CD14-positive monocyte (primary cell): ENCODE measurements at regions of chr4 and their contacts with region 1.

Region 1: DNA sequence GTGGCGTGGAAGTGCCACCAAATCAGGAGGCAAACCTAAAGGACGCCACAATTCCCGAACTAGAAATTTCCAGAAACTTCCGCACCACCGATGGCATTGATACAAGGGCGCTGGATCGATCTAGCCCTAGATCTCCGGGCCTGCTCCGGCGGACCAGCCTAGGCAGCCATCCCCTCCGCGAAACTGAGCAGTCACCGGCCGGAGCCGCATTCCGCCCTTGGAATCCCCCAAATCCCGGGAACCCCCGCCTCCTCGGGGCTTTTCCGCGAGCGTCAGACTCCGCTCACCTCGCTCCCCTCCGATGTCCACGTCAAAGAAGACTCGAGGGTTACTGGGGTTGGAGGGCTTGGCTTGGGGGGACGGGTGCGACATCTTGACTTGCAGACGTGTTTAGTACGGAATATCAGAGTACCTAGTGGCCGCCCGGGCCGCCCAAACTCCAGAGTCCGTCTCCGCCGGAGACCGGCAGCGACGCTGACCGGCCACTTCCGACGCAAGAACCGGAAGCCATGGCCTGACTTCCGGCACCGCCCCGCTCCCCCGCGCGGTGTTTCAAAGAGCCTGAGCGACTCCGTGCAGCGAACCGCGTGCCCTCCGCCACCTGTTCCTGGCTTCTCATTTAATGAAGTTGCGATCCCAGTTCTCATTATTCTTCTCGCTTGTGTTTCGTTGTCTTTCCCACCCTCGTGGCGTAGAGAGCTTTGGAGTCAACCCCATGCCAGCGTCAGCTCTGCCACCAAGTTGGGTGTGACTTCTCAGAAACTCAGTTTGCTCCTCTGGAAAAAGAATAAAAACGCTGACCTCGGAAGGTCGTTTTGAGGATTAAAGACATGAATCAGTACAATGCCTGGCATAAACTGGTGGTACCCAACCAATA is at the start of gene PPID:
- DNase-seq: peak; percentile 78 to 92 (median 80)
- H3K4me3 ChIP-seq: peak within 1 kb of the TSS; percentile 52 to 97 (median 90)
- H3K4me3 Mint-ChIP-seq: peak within 1 kb of the TSS; percentile 97 to 100
- H3K27ac ChIP-seq: peak within 1 kb of the TSS; percentile 96 to 98
- H3K27ac Mint-ChIP-seq: peak within 1 kb of the TSS; percentile 97 to 99 (median 98)
- H3K4me1 ChIP-seq: peaks cover 11 to 12% of the 10 kb centered on the region in 2 donors
- H3K4me1 Mint-ChIP-seq: peaks cover 18% of the 10 kb centered on the region
- H3K27me3 ChIP-seq: no peaks in the 10 kb centered on the region
- H3K27me3 Mint-ChIP-seq: no peaks in the 10 kb centered on the region
- CTCF ChIP-seq: no peak
- polyA plus RNA-seq, gene PPID: 11.0 to 30.5 (median 18.1) TPM

Region 2: GRCh38 chr4:158671915-158672806 is 51.0 kb before region 1 on chr4 and contains the start of gene ETFDH:
- intact Hi-C with region 1: loop called (anchors 5 to 10 kb)
- DNase-seq: peak; percentile 96 to 99 (median 99)
- H3K4me3 ChIP-seq: peak within 1 kb of the TSS; percentile 73 to 99 (median 98)
- H3K4me3 Mint-ChIP-seq: peak within 1 kb of the TSS; percentile 96 to 97
- H3K27ac ChIP-seq: peak within 1 kb of the TSS; percentile 94 to 95
- H3K27ac Mint-ChIP-seq: peak within 1 kb of the TSS; percentile 92 to 99 (median 97)
- H3K4me1 ChIP-seq: peaks cover 20 to 32% of the 10 kb centered on the region in 2 donors
- H3K4me1 Mint-ChIP-seq: peaks cover 28% of the 10 kb centered on the region
- H3K27me3 ChIP-seq: no peaks in the 10 kb centered on the region
- H3K27me3 Mint-ChIP-seq: no peaks in the 10 kb centered on the region
- CTCF ChIP-seq: peak; percentile 60
- polyA plus RNA-seq, gene ETFDH: 11.9 to 17.8 (median 16.8) TPM

Region 3: GRCh38 chr4:158691750-158692149 is 31.4 kb before region 1 on chr4:
- intact Hi-C with region 1: no loop called
- DNase-seq: no peak
- H3K4me3 ChIP-seq: no peak overlapping the region
- H3K4me3 Mint-ChIP-seq: no peak overlapping the region
- H3K27ac ChIP-seq: no peak overlapping the region
- H3K27ac Mint-ChIP-seq: no peak overlapping the region
- H3K4me1 ChIP-seq: no peaks in the 10 kb centered on the region
- H3K4me1 Mint-ChIP-seq: no peaks in the 10 kb centered on the region
- H3K27me3 ChIP-seq: no peaks in the 10 kb centered on the region
- H3K27me3 Mint-ChIP-seq: peaks cover 0 to 3% (median 0%) of the 10 kb centered on the region in 3 donors
- CTCF ChIP-seq: no peak

Region 4: DNA sequence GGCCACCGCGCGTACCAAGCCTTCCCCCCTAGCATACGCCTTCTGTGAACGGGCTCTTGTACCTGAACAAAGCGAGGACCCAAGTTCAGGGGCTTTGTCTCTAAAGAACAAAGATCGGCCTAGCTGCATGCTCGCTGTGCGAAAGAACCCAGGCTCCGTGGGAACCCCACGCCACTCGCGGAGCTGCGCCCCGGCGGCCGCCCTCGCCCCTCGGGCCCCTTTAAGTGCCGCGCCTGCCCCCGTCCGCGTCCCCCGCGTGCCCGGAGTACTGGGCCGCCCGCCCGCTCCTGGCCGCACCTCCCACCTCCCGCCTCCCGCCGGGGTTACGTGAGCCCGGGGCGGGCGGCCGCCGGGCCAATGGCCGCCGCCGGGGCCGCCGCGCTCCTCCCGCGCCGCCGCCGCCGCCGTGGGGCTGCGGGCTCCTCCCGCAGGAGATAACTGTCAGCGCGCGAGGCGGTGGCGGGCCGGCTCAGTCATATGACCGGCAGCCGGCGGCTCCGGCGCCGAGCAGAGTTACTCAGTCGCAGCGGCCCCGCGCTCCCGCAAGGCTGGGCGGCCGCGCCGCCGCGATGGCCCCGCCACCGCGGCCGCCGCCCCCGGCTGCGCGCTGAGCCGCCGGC is 45.5 kb after region 1 on chr4 and contains the start of gene FNIP2:
- intact Hi-C with region 1: loop called in 1 of 2 experiments (anchors 5 kb)
- DNase-seq: peak; percentile 68 to 83 (median 79)
- H3K4me3 ChIP-seq: peak within 1 kb of the TSS; percentile 50 to 95 (median 90)
- H3K4me3 Mint-ChIP-seq: peak within 1 kb of the TSS; percentile 98 to 100
- H3K27ac ChIP-seq: peak within 1 kb of the TSS; percentile 86 to 90
- H3K27ac Mint-ChIP-seq: peak within 1 kb of the TSS; percentile 93 to 99 (median 96)
- H3K4me1 ChIP-seq: peaks cover 41 to 51% of the 10 kb centered on the region in 2 donors
- H3K4me1 Mint-ChIP-seq: peaks cover 60% of the 10 kb centered on the region
- H3K27me3 ChIP-seq: no peaks in the 10 kb centered on the region
- H3K27me3 Mint-ChIP-seq: peaks cover 0 to 2% (median 0%) of the 10 kb centered on the region in 3 donors
- CTCF ChIP-seq: no peak
- polyA plus RNA-seq, gene FNIP2: 3.5 to 7.7 (median 5.7) TPM

Region 5: DNA sequence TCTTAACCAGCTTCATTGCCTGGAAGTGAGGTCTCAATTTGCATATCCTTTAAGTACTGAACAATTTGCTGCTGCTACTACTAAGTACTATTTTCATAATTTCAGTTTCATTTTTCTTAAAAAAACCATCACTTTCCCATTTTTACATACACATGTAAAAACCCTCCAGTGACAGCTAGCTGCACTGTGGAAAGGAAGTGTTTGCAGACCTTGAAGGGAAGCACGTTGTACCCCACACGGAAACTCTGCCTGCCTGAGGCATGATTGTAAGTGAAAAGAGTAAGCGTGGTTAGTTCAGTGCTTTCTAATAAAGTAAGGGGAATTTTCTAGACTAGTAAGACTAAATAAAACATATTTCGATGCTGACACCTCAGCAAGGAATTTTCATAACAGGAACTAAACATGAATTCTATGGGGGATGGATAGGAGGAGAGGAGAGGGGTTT is 483.3 kb after region 1 on chr4:
- intact Hi-C with region 1: loop called (anchors 5 to 10 kb)
- DNase-seq: peak in 1 of 3 donors; percentile 15
- H3K4me3 ChIP-seq: no peak overlapping the region
- H3K4me3 Mint-ChIP-seq: peak overlapping the region; percentile 21 to 76
- H3K27ac ChIP-seq: no peak overlapping the region
- H3K27ac Mint-ChIP-seq: peak overlapping the region in 3 of 7 donors; percentile 38 to 72 (median 68)
- H3K4me1 ChIP-seq: peaks cover 11 to 18% of the 10 kb centered on the region in 2 donors
- H3K4me1 Mint-ChIP-seq: peaks cover 36% of the 10 kb centered on the region
- H3K27me3 ChIP-seq: no peaks in the 10 kb centered on the region
- H3K27me3 Mint-ChIP-seq: no peaks in the 10 kb centered on the region
- CTCF ChIP-seq: no peak